ENCODE measurements at regions of chr20 and their contacts with region 1.

Region 1: GRCh38 chr20:45812157-45813020 is at the start of gene UBE2C:
- DNase-seq: peak; percentile 96
- ATAC-seq: peak; percentile 100
- H3K4me3 ChIP-seq: peak within 1 kb of the TSS in 4 of 5 experiments; percentile 52 to 85 (median 65)
- H3K4me3 Mint-ChIP-seq: peak within 1 kb of the TSS; percentile 88
- H3K27ac ChIP-seq: no peak within 1 kb of the TSS
- H3K27ac Mint-ChIP-seq: peak within 1 kb of the TSS; percentile 70
- H3K4me1 ChIP-seq: peaks cover 9 to 16% of the 10 kb centered on the region in 2 donors
- H3K4me1 Mint-ChIP-seq: peaks cover 16% of the 10 kb centered on the region
- H3K27me3 ChIP-seq: peaks cover 0 to 2% (median 0%) of the 10 kb centered on the region in 4 experiments
- H3K27me3 Mint-ChIP-seq: no peaks in the 10 kb centered on the region
- CTCF ChIP-seq: no peak
- total RNA-seq, gene UBE2C: 0.54 TPM in 1 of 2 replicates, not detected in the other

Region 2: DNA sequence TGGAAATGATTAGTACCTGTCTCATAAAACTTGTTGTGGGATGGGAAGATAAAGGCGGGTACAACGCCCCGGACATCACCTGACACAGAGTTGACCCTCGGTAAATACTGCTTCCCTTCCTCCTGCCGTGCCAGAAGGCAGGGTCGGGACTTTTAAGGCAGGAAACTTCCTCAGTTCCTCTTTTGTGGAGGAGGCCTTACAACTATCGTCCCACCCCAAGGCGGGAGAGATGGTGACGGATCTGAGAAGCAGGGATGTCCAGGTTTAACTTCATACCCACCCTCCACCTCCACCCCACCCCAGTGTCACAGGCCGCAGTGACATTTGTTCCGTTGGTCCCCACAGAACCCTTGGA is 20.1 kb before region 1 on chr20:
- CTCF ChIA-PET with region 1: interaction called, 3 read pairs
- POLR2A ChIA-PET with region 1: no interaction called
- intact Hi-C with region 1: loop called (anchors 1 kb)
- DNase-seq: peak; percentile 61
- ATAC-seq: peak; percentile 22
- H3K4me3 ChIP-seq: peak overlapping the region; percentile 72 to 95 (median 89)
- H3K4me3 Mint-ChIP-seq: peak overlapping the region; percentile 90
- H3K27ac ChIP-seq: peak overlapping the region; percentile 75 to 96
- H3K27ac Mint-ChIP-seq: peak overlapping the region; percentile 93
- H3K4me1 ChIP-seq: peaks cover 8 to 13% of the 10 kb centered on the region in 2 donors
- H3K4me1 Mint-ChIP-seq: peaks cover 19% of the 10 kb centered on the region
- H3K27me3 ChIP-seq: no peaks in the 10 kb centered on the region
- H3K27me3 Mint-ChIP-seq: no peaks in the 10 kb centered on the region
- CTCF ChIP-seq: no peak

Region 3: GRCh38 chr20:45880988-45881788 is 68.8 kb after region 1 on chr20 and contains the start of gene ZSWIM1:
- CTCF ChIA-PET with region 1: no interaction called
- POLR2A ChIA-PET with region 1: no interaction called
- intact Hi-C with region 1: loop called (anchors 2 kb)
- DNase-seq: peak; percentile 99
- ATAC-seq: peak; percentile 99
- H3K4me3 ChIP-seq: peak within 1 kb of the TSS; percentile 76 to 96 (median 86)
- H3K4me3 Mint-ChIP-seq: peak within 1 kb of the TSS; percentile 91
- H3K27ac ChIP-seq: peak within 1 kb of the TSS; percentile 82 to 89
- H3K27ac Mint-ChIP-seq: peak within 1 kb of the TSS; percentile 90
- H3K4me1 ChIP-seq: peaks cover 3 to 19% of the 10 kb centered on the region in 2 donors
- H3K4me1 Mint-ChIP-seq: peaks cover 33% of the 10 kb centered on the region
- H3K27me3 ChIP-seq: no peaks in the 10 kb centered on the region
- H3K27me3 Mint-ChIP-seq: no peaks in the 10 kb centered on the region
- CTCF ChIP-seq: no peak
- total RNA-seq, gene ZSWIM1: 15.7 and 18.5 TPM in 2 replicates

Region 4: GRCh38 chr20:45924391-45925261 is 112.2 kb after region 1 on chr20:
- CTCF ChIA-PET with region 1: no interaction called
- POLR2A ChIA-PET with region 1: no interaction called
- intact Hi-C with region 1: no loop called
- DNase-seq: no peak
- ATAC-seq: no peak
- H3K4me3 ChIP-seq: no peak overlapping the region
- H3K4me3 Mint-ChIP-seq: no peak overlapping the region
- H3K27ac ChIP-seq: no peak overlapping the region
- H3K27ac Mint-ChIP-seq: no peak overlapping the region
- H3K4me1 ChIP-seq: no peaks in the 10 kb centered on the region
- H3K4me1 Mint-ChIP-seq: no peaks in the 10 kb centered on the region
- H3K27me3 ChIP-seq: peaks cover 0 to 10% (median 2%) of the 10 kb centered on the region in 4 experiments
- H3K27me3 Mint-ChIP-seq: peaks cover 19% of the 10 kb centered on the region
- CTCF ChIP-seq: no peak